Calu3 (cell line): ENCODE measurements at regions of chr10 and their contacts with region 1.

Region 1: GRCh38 chr10:50885097-50885859 is at the start of gene A1CF:
- DNase-seq: no peak
- H3K4me3 Mint-ChIP-seq: no peak within 1 kb of the TSS
- H3K27ac Mint-ChIP-seq: no peak within 1 kb of the TSS
- H3K4me1 Mint-ChIP-seq: peaks cover 10% of the 10 kb centered on the region
- H3K27me3 Mint-ChIP-seq: no peaks in the 10 kb centered on the region
- CTCF ChIP-seq: no peak
- total RNA-seq, gene A1CF: 0.69 TPM in 1 of 2 replicates, not detected in the other

Region 2: DNA sequence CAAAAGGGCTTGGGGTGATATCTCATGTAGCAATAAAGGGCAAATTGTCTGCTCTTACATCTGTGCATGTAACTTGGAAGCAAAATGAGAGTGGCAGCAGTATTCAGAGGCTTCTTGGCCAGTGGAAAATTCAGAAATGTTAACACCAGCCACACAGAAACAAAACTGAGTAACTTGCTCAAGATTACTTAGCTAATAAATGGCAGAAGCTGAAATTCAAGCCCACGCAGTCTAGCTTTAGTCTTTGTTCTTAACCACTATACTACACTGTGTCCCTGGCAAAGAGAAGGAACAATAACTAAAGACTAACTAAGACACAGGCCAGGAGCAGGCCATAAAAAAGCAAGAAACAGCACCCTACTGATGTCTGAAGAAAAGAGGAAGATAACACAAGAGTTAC is 448.0 kb before region 1 on chr10:
- CTCF ChIA-PET with region 1: no interaction called
- intact Hi-C with region 1: loop called (anchors 5 kb)
- DNase-seq: no peak
- H3K4me3 Mint-ChIP-seq: no peak overlapping the region
- H3K27ac Mint-ChIP-seq: no peak overlapping the region
- H3K4me1 Mint-ChIP-seq: no peaks in the 10 kb centered on the region
- H3K27me3 Mint-ChIP-seq: no peaks in the 10 kb centered on the region
- CTCF ChIP-seq: no peak

Region 3: DNA sequence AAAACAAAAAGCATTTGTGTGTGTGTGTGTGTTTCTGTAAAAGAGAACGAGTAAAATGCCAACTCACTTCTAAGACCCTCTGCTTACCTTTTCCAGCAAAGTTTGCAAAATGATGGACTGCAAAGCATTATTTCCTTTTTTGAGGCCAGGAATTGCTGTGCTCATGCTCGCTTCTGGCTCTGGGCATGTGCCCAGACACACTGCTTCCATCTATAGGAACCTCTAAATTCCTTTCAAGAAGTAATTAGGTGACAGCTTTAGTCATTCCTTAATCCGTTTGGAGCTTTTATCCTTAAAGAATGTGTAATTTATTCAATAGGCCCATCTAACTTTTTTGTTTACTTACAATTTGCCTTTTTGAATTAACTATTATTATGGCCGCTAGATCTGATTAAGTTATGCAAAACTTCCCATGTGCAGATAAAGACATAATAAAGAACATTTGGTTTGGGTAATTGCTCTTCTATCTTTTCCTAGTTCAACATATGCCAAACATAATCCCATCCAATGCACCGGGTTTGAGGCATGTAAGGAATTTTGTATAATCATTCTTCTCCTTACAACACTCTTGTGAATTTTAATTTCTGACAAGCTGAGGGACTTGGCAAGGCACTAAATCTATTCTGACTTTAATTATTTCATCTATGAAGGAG is 34.6 kb before region 1 on chr10:
- CTCF ChIA-PET with region 1: no interaction called
- intact Hi-C with region 1: loop called (anchors 5 kb)
- DNase-seq: no peak
- H3K4me3 Mint-ChIP-seq: no peak overlapping the region
- H3K27ac Mint-ChIP-seq: peak overlapping the region; percentile 22
- H3K4me1 Mint-ChIP-seq: peaks cover 38% of the 10 kb centered on the region
- H3K27me3 Mint-ChIP-seq: no peaks in the 10 kb centered on the region
- CTCF ChIP-seq: no peak